ENCODE measurements at regions of chr2 and their contacts with region 1.

Region 1: GRCh38 chr2:76180676-76181075 is 470.0 kb upstream of the GCFC2 start:
- DNase-seq: no peak
- ATAC-seq: no peak
- H3K4me3 ChIP-seq: no peak overlapping the region
- H3K27ac ChIP-seq: no peak overlapping the region
- H3K4me1 ChIP-seq: no peaks in the 10 kb centered on the region
- H3K27me3 ChIP-seq: no peaks in the 10 kb centered on the region
- CTCF ChIP-seq: no peak
- POLR2A ChIP-seq: no peak
- RAD21 ChIP-seq: no peak

Region 2: GRCh38 chr2:75936311-75936710 is 244.4 kb before region 1 on chr2:
- CTCF ChIA-PET with region 1: no interaction called
- POLR2A ChIA-PET with region 1: interaction called, 10 read pairs
- dilution Hi-C with region 1: no loop called
- in situ Hi-C with region 1: no loop called
- intact Hi-C with region 1: no loop called
- DNase-seq: no peak
- ATAC-seq: no peak
- H3K4me3 ChIP-seq: no peak overlapping the region
- H3K27ac ChIP-seq: no peak overlapping the region
- H3K4me1 ChIP-seq: no peaks in the 10 kb centered on the region
- H3K27me3 ChIP-seq: no peaks in the 10 kb centered on the region
- CTCF ChIP-seq: no peak
- POLR2A ChIP-seq: no peak
- RAD21 ChIP-seq: no peak